HepG2 (cell line): ENCODE measurements at regions of chr3 and their contacts with region 1.

Region 1: DNA sequence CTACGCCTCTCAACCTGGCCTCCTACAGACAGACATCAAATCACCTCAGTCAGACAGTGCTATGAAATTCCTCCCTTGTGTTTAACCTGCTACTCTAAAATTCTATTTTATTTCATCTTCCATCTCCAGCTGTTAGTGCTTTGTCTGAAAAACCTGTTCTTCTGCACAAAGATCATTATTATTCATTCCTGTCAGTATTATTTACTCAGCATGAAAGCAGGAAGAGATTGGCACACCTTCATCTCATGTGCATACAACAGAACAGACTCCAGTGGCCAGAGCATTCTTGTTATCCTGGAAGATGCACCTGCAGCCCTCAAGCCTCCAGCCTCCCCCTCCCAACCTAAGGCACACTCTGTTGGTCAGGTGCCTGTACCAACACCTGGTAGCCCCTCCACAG is 1.8 kb upstream of the ROPN1B start:
- DNase-seq: no peak
- ATAC-seq: no peak
- H3K4me3 ChIP-seq: no peak overlapping the region
- H3K27ac ChIP-seq: no peak overlapping the region
- H3K4me1 ChIP-seq: no peaks in the 10 kb centered on the region
- H3K27me3 ChIP-seq: peaks cover 0 to 9% of the 10 kb centered on the region in 2 experiments; a peak in 1 of 5 replicates
- CTCF ChIP-seq: no peak
- EP300 ChIP-seq: no peak
- POLR2A ChIP-seq: no peak
- RAD21 ChIP-seq: no peak

Region 2: DNA sequence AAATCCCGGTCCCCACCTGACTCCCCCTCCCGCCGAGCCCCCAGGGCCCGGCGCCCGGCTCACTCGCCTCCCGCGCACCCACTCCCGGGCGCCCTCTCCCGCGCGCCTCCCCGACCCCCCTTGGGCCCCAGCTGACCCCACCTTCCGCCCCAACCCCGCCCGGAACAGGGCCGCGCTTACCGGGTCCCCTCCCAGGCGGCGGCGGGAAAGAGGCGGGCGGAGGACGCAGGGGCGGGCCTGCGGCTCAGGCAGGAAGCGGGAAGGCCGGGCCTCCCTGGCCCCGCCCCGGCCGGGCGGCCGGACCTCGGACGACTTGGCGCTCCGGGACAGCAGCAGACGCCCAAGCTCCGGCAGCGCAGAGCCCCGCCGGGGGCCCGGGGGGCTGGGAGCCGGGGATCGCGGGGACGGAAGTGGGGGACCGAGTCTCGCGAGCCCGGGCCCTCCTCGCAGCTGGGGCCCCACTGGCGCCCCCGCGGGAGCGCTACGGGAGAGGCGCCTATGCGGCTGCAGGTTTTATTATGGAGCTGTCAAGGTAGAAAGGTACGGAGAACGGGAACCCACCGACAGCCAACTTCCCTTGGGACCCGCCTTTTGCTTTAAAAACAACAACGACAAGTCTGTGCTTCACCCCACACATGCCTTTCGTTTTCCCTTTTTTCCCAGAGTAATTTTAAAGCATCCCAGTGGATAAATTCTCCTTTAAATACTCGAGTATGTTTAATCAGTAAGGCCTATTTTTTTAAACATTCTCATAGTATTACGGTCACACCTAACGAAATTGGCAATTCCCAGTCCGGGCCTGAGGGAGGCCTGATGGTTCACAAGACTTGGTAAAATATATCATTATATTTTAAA is 117.0 kb after region 1 on chr3 and contains the start of gene SLC41A3:
- CTCF ChIA-PET with region 1: no interaction called
- POLR2A ChIA-PET with region 1: no interaction called
- in situ Hi-C with region 1: no loop called
- intact Hi-C with region 1: loop called (anchors 5 kb)
- DNase-seq: peak; percentile 80
- ATAC-seq: peak; percentile 93
- H3K4me3 ChIP-seq: peak within 1 kb of the TSS; percentile 79 to 94 (median 82)
- H3K27ac ChIP-seq: peak within 1 kb of the TSS; percentile 76
- H3K4me1 ChIP-seq: peaks cover 27% of the 10 kb centered on the region
- H3K27me3 ChIP-seq: no peaks in the 10 kb centered on the region
- CTCF ChIP-seq: peak; percentile 60
- EP300 ChIP-seq: no peak
- POLR2A ChIP-seq: peak in 1 of 2 experiments; percentile 71; a peak in 2 of 4 replicates
- RAD21 ChIP-seq: peak; percentile 69
- total RNA-seq, gene SLC41A3: 16.2 and 26.0 TPM in 2 replicates

Region 3: GRCh38 chr3:126113733-126114442 is 146.8 kb after region 1 on chr3:
- CTCF ChIA-PET with region 1: no interaction called
- POLR2A ChIA-PET with region 1: no interaction called
- in situ Hi-C with region 1: no loop called
- intact Hi-C with region 1: loop called (anchors 10 kb)
- DNase-seq: no peak
- ATAC-seq: peak; percentile 86
- H3K4me3 ChIP-seq: no peak overlapping the region
- H3K27ac ChIP-seq: no peak overlapping the region
- H3K4me1 ChIP-seq: no peaks in the 10 kb centered on the region
- H3K27me3 ChIP-seq: no peaks in the 10 kb centered on the region
- CTCF ChIP-seq: peak; percentile 27
- EP300 ChIP-seq: no peak
- POLR2A ChIP-seq: no peak
- RAD21 ChIP-seq: no peak

Region 4: GRCh38 chr3:126212602-126213378 is 245.7 kb after region 1 on chr3:
- CTCF ChIA-PET with region 1: no interaction called
- POLR2A ChIA-PET with region 1: no interaction called
- in situ Hi-C with region 1: no loop called
- intact Hi-C with region 1: loop called (anchors 10 kb)
- DNase-seq: peak; percentile 29
- ATAC-seq: peak; percentile 91
- H3K4me3 ChIP-seq: peak overlapping the region; percentile 64 to 72 (median 68)
- H3K27ac ChIP-seq: no peak overlapping the region
- H3K4me1 ChIP-seq: peaks cover 37% of the 10 kb centered on the region
- H3K27me3 ChIP-seq: peaks cover 2 to 43% of the 10 kb centered on the region in 2 experiments; a peak in 3 of 5 replicates
- CTCF ChIP-seq: peak; percentile 70
- EP300 ChIP-seq: no peak
- POLR2A ChIP-seq: no peak
- RAD21 ChIP-seq: peak; percentile 77